ENCODE measurements at regions of chr12 and their contacts with region 1.

Region 1: DNA sequence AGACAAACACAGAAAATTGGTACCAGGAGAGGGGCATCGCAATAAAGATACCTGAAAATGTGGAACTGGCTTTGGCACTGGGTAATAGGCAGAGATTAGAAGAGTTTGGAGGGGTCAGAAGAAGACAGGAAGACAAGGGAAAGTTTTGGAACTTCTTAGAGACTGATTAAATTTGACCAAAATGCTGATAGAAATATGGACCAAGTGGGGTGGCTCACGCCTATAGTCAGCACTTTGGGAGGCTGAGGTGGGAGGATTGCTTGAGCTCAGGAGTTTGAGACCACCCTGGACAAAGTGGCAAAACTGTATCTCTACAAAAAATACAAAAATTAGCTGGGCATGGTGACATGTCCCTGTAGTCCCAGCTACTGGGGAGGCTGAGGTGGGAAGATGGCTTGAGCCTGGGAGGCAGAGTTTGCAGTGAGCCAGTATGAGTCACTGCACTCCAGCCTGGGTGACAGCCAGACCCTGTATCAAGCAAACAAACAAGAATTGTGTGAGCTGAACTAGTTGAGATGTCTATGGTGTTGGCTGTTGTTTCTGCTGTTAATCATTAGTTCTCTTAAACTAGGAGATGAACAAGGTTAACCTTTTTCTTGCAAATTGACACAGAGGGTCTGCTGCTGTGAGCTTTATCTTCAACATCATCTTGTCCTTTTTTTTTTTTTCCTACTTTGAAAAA is 23.5 kb downstream of the RASSF3 start:
- DNase-seq: peak; percentile 88
- ATAC-seq: peak; percentile 99
- H3K4me3 ChIP-seq: no peak overlapping the region
- H3K27ac ChIP-seq: peak overlapping the region; percentile 36
- H3K4me1 ChIP-seq: peaks cover 58% of the 10 kb centered on the region
- H3K27me3 ChIP-seq: no peaks in the 10 kb centered on the region
- CTCF ChIP-seq: peak; percentile 34; the same call in 1 of the 2 replicates
- EP300 ChIP-seq: 0 out of 4 replicates have a peak, but pooled peaks of 1 of the 2 experiments have one; percentile 12
- POLR2A ChIP-seq: no peak
- RAD21 ChIP-seq: no peak

Region 2: GRCh38 chr12:64656429-64656828 is 22.6 kb after region 1 on chr12:
- CTCF ChIA-PET with region 1: no interaction called
- POLR2A ChIA-PET with region 1: interaction called, 4 read pairs
- in situ Hi-C with region 1: no loop called
- intact Hi-C with region 1: loop called (anchors 1 kb)
- DNase-seq: peak; percentile 90
- ATAC-seq: peak; percentile 92
- H3K4me3 ChIP-seq: no peak overlapping the region
- H3K27ac ChIP-seq: peak overlapping the region; percentile 14
- H3K4me1 ChIP-seq: peaks cover 68% of the 10 kb centered on the region
- H3K27me3 ChIP-seq: no peaks in the 10 kb centered on the region
- CTCF ChIP-seq: no peak
- EP300 ChIP-seq: peak in 1 of 2 experiments; percentile 95; a peak in 3 of 4 replicates
- POLR2A ChIP-seq: no peak
- RAD21 ChIP-seq: no peak